GM18951 (cell line): ENCODE measurements at regions of chr11 and their contacts with region 1.

Region 1: DNA sequence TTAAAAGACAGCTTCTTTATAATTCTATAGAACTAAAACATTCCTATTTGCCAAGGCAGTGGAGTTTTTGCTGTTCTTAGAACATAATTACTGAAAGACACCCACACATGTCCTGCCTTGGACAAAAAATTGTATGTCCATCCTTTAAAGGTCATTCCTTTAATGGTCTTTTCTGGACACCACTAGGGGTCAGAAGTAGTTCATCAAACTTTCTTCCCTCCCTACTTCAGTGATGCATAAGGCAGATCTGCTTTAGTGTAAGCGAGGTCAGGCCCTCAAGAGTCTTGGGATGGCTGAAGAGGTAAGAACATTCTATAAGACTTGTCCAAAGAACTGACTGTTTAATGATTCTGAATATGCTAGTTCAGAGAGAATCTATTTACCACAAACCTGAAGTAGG is 4.3 kb upstream of the OR51V1 start:
- POLR2A ChIP-seq: no peak

Region 2: GRCh38 chr11:5369793-5370192 is 165.0 kb after region 1 on chr11:
- in situ Hi-C with region 1: loop called (anchors 10 kb)
- POLR2A ChIP-seq: no peak